ENCODE measurements at regions of chr18 and their contacts with region 1.

Region 1: GRCh38 chr18:12883684-12884405 is at the start of gene PTPN2:
- DNase-seq: peak; percentile 96
- ATAC-seq: peak; percentile 90
- H3K4me3 ChIP-seq: peak within 1 kb of the TSS; percentile 95
- H3K27ac ChIP-seq: peak within 1 kb of the TSS; percentile 93
- H3K4me1 ChIP-seq: peaks cover 16% of the 10 kb centered on the region
- H3K27me3 ChIP-seq: no peaks in the 10 kb centered on the region
- CTCF ChIP-seq: no peak
- total RNA-seq, gene PTPN2: 59.8 and 62.4 TPM in 2 replicates

Region 2: GRCh38 chr18:12403601-12404506 is 480.0 kb before region 1 on chr18:
- CTCF ChIA-PET with region 1: no interaction called
- POLR2A ChIA-PET with region 1: interaction called, 18 read pairs
- intact Hi-C with region 1: no loop called
- DNase-seq: peak; percentile 88
- ATAC-seq: peak; percentile 28
- H3K4me3 ChIP-seq: no peak overlapping the region
- H3K27ac ChIP-seq: peak overlapping the region; percentile 38
- H3K4me1 ChIP-seq: peaks cover 27% of the 10 kb centered on the region
- H3K27me3 ChIP-seq: 0 out of 2 replicates have a peak, but pooled peaks cover 4% of the 10 kb centered on the region
- CTCF ChIP-seq: no peak

Region 3: DNA sequence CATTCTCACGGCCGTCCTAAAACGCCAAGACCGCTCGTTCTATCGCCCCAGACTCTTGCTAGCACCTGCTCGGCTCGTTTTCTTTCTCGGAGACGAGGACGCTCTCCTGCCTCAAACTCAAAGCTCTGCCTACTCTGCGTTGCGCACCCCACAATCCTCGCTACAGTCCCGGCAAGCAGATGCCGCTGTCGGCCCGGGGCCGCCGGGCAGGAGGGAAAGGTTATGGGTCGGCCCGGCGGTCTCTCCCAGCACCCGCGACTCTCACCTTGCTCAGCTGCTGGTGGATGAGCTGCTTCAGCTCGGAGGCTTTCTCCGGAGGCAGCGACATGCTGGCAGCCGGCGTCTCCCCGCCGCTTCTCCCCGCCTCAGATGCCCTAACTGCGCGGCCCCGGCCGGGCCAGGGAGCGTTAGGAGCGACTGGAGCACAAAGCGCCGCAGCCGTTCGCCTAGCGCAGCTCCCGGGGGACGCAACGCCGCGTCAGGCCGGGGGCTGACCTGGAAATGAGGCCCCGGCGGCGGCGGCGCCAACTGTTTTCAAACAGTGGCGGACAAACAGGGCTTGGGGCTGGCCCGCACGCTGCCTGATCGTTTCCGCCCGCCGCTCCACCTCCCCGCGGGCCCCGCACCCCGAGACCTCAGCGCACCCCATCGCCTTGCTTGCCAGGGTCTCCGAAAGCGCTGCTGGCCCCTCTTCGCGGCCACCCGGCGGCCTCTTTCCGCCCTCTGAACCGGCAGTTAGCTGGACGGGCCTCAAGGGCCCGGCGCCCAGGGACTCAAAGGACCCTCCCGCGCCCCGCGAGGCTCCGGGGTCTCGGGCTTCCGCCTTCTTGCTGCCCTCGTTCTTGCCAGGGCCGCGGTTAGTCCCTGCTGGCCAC is 181.4 kb before region 1 on chr18 and contains the starts of genes CEP76 and PSMG2:
- CTCF ChIA-PET with region 1: no interaction called
- POLR2A ChIA-PET with region 1: no interaction called
- intact Hi-C with region 1: no loop called
- DNase-seq: peak; percentile 88
- ATAC-seq: peak; percentile 84
- H3K4me3 ChIP-seq: peak within 1 kb of the TSS; percentile 80
- H3K27ac ChIP-seq: peak within 1 kb of the TSS; percentile 84
- H3K4me1 ChIP-seq: peaks cover 34% of the 10 kb centered on the region
- H3K27me3 ChIP-seq: no peaks in the 10 kb centered on the region
- CTCF ChIP-seq: no peak
- total RNA-seq, gene CEP76: 13.5 and 25.1 TPM in 2 replicates
- total RNA-seq, gene PSMG2: 78.2 and 93.6 TPM in 2 replicates

Region 4: GRCh38 chr18:12737243-12737902 is 146.5 kb before region 1 on chr18:
- CTCF ChIA-PET with region 1: no interaction called
- POLR2A ChIA-PET with region 1: interaction called, 10 read pairs
- intact Hi-C with region 1: loop called (anchors 1 kb)
- DNase-seq: no peak
- ATAC-seq: no peak
- H3K4me3 ChIP-seq: no peak overlapping the region
- H3K27ac ChIP-seq: no peak overlapping the region
- H3K4me1 ChIP-seq: peaks cover 18% of the 10 kb centered on the region
- H3K27me3 ChIP-seq: no peaks in the 10 kb centered on the region
- CTCF ChIP-seq: no peak

Region 5: GRCh38 chr18:12777500-12777944 is 106.3 kb before region 1 on chr18:
- CTCF ChIA-PET with region 1: no interaction called
- POLR2A ChIA-PET with region 1: interaction called, 15 read pairs
- intact Hi-C with region 1: no loop called
- DNase-seq: peak; percentile 33
- ATAC-seq: peak; percentile 77
- H3K4me3 ChIP-seq: peak overlapping the region; percentile 65
- H3K27ac ChIP-seq: peak overlapping the region; percentile 14
- H3K4me1 ChIP-seq: no peaks in the 10 kb centered on the region; the same call in 1 of the 2 replicates
- H3K27me3 ChIP-seq: no peaks in the 10 kb centered on the region
- CTCF ChIP-seq: no peak

Region 6: DNA sequence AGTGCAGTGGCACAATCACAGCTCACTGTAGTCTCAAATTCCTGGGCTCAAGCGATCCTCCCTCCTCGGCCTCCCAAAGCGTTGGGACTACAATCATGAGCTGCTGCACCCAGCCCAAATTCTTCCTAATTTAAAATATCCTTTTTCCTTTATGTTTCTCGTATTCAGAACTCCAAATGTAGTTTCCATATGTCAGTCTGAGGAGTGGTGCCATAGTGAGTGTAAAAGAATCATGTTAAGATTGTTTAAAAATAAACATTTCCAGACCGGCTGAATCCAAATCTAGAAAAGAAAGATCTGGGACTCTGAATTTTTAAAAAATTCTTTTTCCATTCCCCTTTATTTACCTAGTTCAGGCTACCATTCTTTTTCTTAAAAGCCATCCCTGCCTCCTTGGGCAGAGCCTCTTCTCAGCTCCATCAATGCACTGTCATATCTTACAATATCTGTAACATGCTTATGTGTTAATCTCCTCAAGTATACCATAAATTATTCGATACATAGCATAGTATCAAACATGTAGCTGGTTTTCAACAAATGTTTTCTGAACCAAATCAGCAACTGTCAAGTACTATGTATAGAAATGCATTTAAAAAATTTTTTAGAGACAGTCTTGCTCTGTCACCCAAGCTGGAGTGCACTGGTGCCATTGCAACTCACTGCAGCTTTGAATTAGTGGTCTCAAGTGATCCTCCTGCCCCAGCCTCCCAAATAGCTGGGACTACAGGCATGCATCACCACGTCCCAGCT is 31.1 kb before region 1 on chr18:
- CTCF ChIA-PET with region 1: no interaction called
- POLR2A ChIA-PET with region 1: interaction called, 13 read pairs
- intact Hi-C with region 1: no loop called
- DNase-seq: no peak
- ATAC-seq: no peak
- H3K4me3 ChIP-seq: no peak overlapping the region
- H3K27ac ChIP-seq: no peak overlapping the region
- H3K4me1 ChIP-seq: peaks cover 9% of the 10 kb centered on the region; the same call in 1 of the 2 replicates
- H3K27me3 ChIP-seq: no peaks in the 10 kb centered on the region
- CTCF ChIP-seq: no peak

Region 7: DNA sequence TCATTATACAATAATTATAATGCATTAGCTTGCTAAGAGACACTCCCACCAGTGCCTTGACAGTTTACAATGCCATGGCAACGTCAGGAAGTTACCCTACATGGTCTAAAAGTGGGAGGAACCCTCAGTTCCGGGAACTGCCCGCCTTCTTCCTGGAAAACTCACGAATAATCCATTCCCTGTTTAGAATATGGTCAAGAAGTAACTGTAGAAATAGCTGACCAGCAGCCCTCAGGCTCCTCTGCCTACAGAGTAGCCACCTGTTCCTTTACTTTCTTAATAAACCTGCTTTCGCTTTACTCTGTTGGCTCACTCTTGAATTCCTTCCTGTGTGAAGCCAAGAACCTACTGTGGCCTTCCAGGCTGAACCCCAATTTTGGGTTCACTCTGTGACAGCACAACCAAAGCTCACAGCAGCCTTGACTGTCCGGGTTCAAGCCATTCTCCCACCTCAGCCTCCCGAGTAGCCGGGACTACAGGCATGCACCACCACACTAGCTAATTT is 20.2 kb after region 1 on chr18:
- CTCF ChIA-PET with region 1: no interaction called
- POLR2A ChIA-PET with region 1: interaction called, 17 read pairs
- intact Hi-C with region 1: no loop called
- DNase-seq: no peak
- ATAC-seq: no peak
- H3K4me3 ChIP-seq: no peak overlapping the region
- H3K27ac ChIP-seq: no peak overlapping the region
- H3K4me1 ChIP-seq: no peaks in the 10 kb centered on the region
- H3K27me3 ChIP-seq: peaks cover 23% of the 10 kb centered on the region
- CTCF ChIP-seq: no peak

Region 8: GRCh38 chr18:12990967-12991838 is 107.4 kb after region 1 on chr18 and contains the start of gene CEP192:
- CTCF ChIA-PET with region 1: no interaction called
- POLR2A ChIA-PET with region 1: interaction called, 16 read pairs
- intact Hi-C with region 1: no loop called
- DNase-seq: peak; percentile 98
- ATAC-seq: peak; percentile 88
- H3K4me3 ChIP-seq: peak within 1 kb of the TSS; percentile 94
- H3K27ac ChIP-seq: peak within 1 kb of the TSS; percentile 82
- H3K4me1 ChIP-seq: peaks cover 22% of the 10 kb centered on the region
- H3K27me3 ChIP-seq: no peaks in the 10 kb centered on the region
- CTCF ChIP-seq: peak; percentile 18; the same call in 1 of the 2 replicates
- total RNA-seq, gene CEP192: 32.6 and 34.4 TPM in 2 replicates

Measured in PC-3 (cell line).